HepG2 (cell line): ENCODE measurements at regions of chr7 and their contacts with region 1.

Region 1: DNA sequence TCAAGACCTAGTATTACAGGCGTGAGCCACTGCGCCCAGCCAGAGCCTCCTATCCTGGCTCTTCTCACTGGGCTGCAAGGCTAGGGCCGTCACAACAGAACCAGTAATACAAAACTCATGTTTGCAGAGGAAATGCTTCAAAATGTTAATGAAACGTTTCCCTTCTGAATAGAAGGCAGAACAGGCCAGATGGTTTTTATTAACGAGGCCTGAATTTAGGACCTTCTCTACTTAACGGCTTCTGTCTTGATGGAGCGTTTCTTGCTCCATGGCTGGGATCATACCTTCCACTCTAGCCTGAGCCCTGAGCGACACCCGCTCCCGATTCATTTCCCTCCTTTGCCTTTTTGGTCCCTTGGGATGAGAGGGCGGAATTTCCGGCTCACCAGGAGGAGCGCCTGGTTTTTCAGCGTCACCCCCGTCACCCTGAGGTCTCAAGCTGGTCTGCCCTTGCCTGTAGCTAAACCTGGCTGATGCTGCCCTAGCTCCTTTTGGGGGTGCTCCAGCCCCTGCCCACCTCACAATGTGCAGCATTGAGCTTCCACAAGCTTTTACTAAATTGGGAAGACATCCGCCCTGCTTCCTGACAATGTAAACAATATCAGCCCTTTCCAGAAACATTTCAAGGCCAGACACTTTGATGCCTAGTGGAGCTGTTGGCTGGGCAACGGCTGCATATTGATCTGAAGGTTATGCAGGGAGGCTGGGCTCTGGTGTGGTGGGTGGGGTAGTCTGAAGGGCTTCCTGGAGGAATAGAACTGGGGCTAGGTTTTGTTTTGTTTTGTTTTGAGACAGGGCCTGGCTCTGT is 5.2 kb downstream of the CLIP2 start:
- DNase-seq: peak; percentile 89
- ATAC-seq: peak; percentile 80
- H3K4me3 ChIP-seq: peak overlapping the region in 2 of 3 experiments; percentile 7 to 46; a peak in 4 of 6 replicates
- H3K27ac ChIP-seq: peak overlapping the region; percentile 98
- H3K4me1 ChIP-seq: peaks cover 57% of the 10 kb centered on the region
- H3K27me3 ChIP-seq: no peaks in the 10 kb centered on the region
- CTCF ChIP-seq: no peak
- EP300 ChIP-seq: peak; percentile 17 to 80; a peak in 2 of 4 replicates
- POLR2A ChIP-seq: peak in 1 of 2 experiments; percentile 52; a peak in 1 of 4 replicates
- RAD21 ChIP-seq: no peak

Region 2: DNA sequence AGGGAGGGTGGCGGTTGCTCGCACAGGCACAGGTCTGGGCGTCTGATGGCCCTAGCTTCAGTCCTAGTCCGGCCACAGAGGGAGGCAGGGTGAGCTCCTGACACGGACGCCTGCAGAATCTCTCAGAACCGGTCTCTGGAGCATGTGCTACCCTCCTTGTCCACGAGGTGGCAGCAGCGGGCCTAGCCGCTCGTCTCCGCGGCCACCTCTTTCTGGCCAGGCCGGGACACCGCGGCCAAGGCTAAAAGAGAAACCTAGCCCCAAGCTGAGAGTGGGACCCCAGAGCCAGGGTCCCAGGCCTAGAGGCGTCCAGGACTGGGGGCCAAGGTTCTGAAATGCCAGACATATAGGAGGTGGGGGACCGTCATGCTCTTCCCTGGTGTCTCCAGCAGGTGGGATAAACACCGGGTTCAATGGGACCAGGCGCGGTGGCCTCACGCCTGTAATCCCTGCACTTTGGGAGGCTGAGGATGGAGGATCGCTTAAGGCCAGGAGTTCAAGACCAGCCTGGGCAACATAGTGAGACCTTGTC is 87.7 kb before region 1 on chr7:
- CTCF ChIA-PET with region 1: no interaction called
- POLR2A ChIA-PET with region 1: no interaction called
- in situ Hi-C with region 1: no loop called
- intact Hi-C with region 1: loop called (anchors 1 kb)
- DNase-seq: peak; percentile 61
- ATAC-seq: peak; percentile 78
- H3K4me3 ChIP-seq: peak overlapping the region in 2 of 3 experiments; percentile 38 to 62; a peak in 3 of 6 replicates
- H3K27ac ChIP-seq: no peak overlapping the region
- H3K4me1 ChIP-seq: 0 out of 2 replicates have a peak, but pooled peaks cover 5% of the 10 kb centered on the region
- H3K27me3 ChIP-seq: no peaks in the 10 kb centered on the region
- CTCF ChIP-seq: peak; percentile 98
- EP300 ChIP-seq: no peak
- POLR2A ChIP-seq: no peak
- RAD21 ChIP-seq: peak; percentile 94

Region 3: GRCh38 chr7:74262639-74263398 is 31.6 kb before region 1 on chr7:
- CTCF ChIA-PET with region 1: no interaction called
- POLR2A ChIA-PET with region 1: interaction called, 60 read pairs
- in situ Hi-C with region 1: no loop called
- intact Hi-C with region 1: loop called (anchors 5 kb)
- DNase-seq: peak; percentile 42
- ATAC-seq: peak; percentile 78
- H3K4me3 ChIP-seq: peak overlapping the region; percentile 22 to 65 (median 49)
- H3K27ac ChIP-seq: peak overlapping the region; percentile 45
- H3K4me1 ChIP-seq: peaks cover 77% of the 10 kb centered on the region
- H3K27me3 ChIP-seq: no peaks in the 10 kb centered on the region
- CTCF ChIP-seq: no peak
- EP300 ChIP-seq: no peak
- POLR2A ChIP-seq: no peak
- RAD21 ChIP-seq: no peak

Region 4: GRCh38 chr7:74272305-74273038 is 21.9 kb before region 1 on chr7:
- CTCF ChIA-PET with region 1: interaction called, 3 read pairs
- POLR2A ChIA-PET with region 1: interaction called, 60 read pairs
- in situ Hi-C with region 1: no loop called
- intact Hi-C with region 1: no loop called
- DNase-seq: no peak
- ATAC-seq: peak; percentile 68
- H3K4me3 ChIP-seq: peak overlapping the region; percentile 18 to 50 (median 40); a peak in 4 of 6 replicates
- H3K27ac ChIP-seq: peak overlapping the region; percentile 6
- H3K4me1 ChIP-seq: peaks cover 50% of the 10 kb centered on the region
- H3K27me3 ChIP-seq: no peaks in the 10 kb centered on the region
- CTCF ChIP-seq: no peak
- EP300 ChIP-seq: no peak
- POLR2A ChIP-seq: peak in 1 of 2 experiments; percentile 41; a peak in 2 of 4 replicates
- RAD21 ChIP-seq: no peak

Region 5: DNA sequence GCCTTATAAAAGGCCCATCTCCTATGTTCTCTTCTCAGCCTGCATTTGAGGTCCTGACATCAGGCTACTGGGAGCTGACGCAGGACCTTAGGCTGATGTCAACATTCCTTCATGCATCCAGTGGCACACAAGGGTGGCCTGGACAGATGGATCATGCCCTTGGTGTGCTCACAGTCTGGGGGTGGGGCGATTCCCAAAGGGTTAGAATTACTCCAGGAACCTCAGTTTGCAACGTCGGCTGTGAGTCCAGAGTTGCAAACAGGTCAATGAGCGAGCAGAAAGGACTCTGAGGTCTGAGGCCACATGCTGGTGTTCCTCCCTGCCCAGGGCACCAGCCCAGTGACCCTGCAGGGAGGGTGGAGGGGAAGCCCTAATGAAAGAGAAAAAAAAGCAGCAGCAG is 13.4 kb before region 1 on chr7:
- CTCF ChIA-PET with region 1: no interaction called
- POLR2A ChIA-PET with region 1: interaction called, 43 read pairs
- in situ Hi-C with region 1: no loop called
- intact Hi-C with region 1: no loop called
- DNase-seq: no peak
- ATAC-seq: peak; percentile 22
- H3K4me3 ChIP-seq: no peak overlapping the region; a peak in 1 of 6 replicates
- H3K27ac ChIP-seq: no peak overlapping the region
- H3K4me1 ChIP-seq: peaks cover 53% of the 10 kb centered on the region
- H3K27me3 ChIP-seq: peaks cover 0 to 12% of the 10 kb centered on the region in 2 experiments; a peak in 2 of 5 replicates
- CTCF ChIP-seq: no peak
- EP300 ChIP-seq: no peak
- POLR2A ChIP-seq: no peak
- RAD21 ChIP-seq: no peak

Region 6: DNA sequence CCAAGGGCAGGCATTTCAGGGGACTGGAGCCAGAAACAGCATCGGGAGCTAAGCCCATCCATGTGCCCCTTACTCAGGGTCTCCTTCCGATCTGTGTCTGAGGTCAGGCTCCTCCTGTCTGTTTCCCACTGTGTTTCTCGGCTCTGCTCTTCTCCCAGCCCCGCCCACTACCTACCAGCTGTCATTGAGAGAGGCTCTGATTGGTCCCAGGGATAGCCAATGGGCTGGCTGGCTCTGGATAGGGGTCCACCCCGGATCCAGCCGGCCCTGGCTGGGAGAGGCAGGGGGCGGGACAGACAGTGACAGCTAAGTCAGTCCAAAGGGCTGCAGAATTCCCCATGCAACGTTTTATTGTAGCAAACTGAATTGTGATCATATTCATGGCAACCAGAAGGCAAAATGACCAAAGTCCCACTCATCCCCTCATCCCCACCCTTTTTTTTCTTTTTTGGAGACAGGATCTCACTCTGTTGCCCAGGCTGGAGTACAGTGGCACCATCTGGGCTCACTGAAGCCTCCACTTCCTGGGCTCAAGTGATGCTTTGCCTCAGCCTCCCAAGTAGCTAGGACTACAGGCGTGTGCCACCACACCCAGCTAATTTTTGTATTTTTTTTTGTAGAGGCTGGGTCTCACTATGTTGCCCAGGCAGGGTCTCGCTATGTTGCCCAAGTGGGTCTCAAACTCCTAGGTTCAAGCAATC is 71.1 kb after region 1 on chr7:
- CTCF ChIA-PET with region 1: no interaction called
- POLR2A ChIA-PET with region 1: interaction called, 7 read pairs
- in situ Hi-C with region 1: no loop called
- intact Hi-C with region 1: loop called (anchors 2 kb)
- DNase-seq: peak; percentile 90
- ATAC-seq: peak; percentile 99
- H3K4me3 ChIP-seq: peak overlapping the region in 1 of 3 experiments; percentile 19; a peak in 1 of 6 replicates
- H3K27ac ChIP-seq: peak overlapping the region; percentile 45
- H3K4me1 ChIP-seq: peaks cover 17% of the 10 kb centered on the region
- H3K27me3 ChIP-seq: no peaks in the 10 kb centered on the region
- CTCF ChIP-seq: no peak
- EP300 ChIP-seq: no peak
- POLR2A ChIP-seq: no peak
- RAD21 ChIP-seq: no peak

Region 7: GRCh38 chr7:74376256-74377036 is 82.1 kb after region 1 on chr7:
- CTCF ChIA-PET with region 1: no interaction called
- POLR2A ChIA-PET with region 1: no interaction called
- in situ Hi-C with region 1: no loop called
- intact Hi-C with region 1: no loop called
- DNase-seq: no peak
- ATAC-seq: no peak; the same call in 2 of the 3 replicates
- H3K4me3 ChIP-seq: no peak overlapping the region
- H3K27ac ChIP-seq: no peak overlapping the region
- H3K4me1 ChIP-seq: peaks cover 12% of the 10 kb centered on the region
- H3K27me3 ChIP-seq: no peaks in the 10 kb centered on the region
- CTCF ChIP-seq: no peak
- EP300 ChIP-seq: no peak
- POLR2A ChIP-seq: no peak
- RAD21 ChIP-seq: no peak